ENCODE measurements at regions of chr3 and their contacts with region 1.

Region 1: DNA sequence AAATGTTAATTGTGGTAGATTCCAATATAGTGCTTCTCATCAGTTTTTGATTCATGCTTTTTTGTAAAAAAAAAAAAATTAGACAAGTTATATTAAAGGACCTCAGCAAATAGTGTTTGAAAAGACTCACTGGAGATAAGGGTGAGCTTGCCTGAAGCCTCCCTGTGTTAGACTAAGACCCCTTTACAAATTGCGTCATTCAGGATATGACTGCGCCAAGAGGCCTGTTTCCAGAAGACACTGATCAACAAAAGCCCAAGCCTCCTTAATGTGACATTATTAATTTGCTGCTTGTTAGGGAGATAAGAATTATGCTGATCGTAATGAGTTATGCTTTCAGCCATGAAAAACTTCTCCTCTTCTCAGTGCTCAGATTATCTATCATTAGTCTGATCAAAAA is 13.0 kb upstream of the DNAJC13 start:
- DNase-seq: no peak
- ATAC-seq: no peak

Region 2: DNA sequence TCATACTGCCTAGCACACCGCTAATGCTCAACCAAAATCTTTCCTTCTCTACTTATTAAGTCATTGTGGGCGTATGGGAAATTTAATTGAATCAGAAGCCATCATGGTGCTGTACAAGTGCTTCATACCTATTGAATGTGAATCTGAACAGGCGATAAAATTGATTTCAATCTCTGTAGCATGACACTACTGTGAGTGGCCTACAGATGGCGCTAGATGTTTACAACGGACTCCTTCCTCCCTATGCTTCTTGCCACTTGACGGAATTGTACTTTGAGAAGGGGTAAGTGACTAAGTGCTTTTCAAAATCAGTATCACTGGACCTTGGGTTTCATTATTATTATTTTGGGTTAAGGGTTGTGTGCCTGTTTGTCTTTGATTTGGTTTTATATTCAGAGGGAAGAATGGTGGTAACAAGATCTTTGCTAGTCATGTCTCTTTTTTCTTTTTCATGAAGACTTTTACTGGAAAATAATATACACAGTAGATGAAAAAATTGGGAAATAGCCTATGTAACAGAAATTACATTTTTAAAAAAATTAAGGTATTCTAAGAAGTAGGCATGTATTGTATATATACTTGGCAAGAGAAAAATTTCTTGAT is 51.6 kb before region 1 on chr3:
- intact Hi-C with region 1: loop called in 1 of 2 experiments (anchors 5 kb)
- DNase-seq: peak in 1 of 2 donors; percentile 76
- ATAC-seq: peak; percentile 84

Region 3: GRCh38 chr3:133014311-133014710 is 610.0 kb after region 1 on chr3:
- intact Hi-C with region 1: no loop called
- DNase-seq: no peak
- ATAC-seq: no peak